ENCODE measurements at regions of chr11 and their contacts with region 1.

Region 1: GRCh38 chr11:66136752-66137123 is 66.7 kb downstream of the PACS1 start:
- DNase-seq: no peak
- CTCF ChIP-seq: no peak

Region 2: GRCh38 chr11:66045177-66045639 is 91.5 kb before region 1 on chr11:
- CTCF ChIA-PET with region 1: interaction called, 13 read pairs
- POLR2A ChIA-PET with region 1: no interaction called
- DNase-seq: peak; percentile 91
- CTCF ChIP-seq: peak; percentile 92

Region 3: GRCh38 chr11:66112601-66113098 is 24.1 kb before region 1 on chr11:
- CTCF ChIA-PET with region 1: interaction called, 64 read pairs
- POLR2A ChIA-PET with region 1: no interaction called
- DNase-seq: no peak
- CTCF ChIP-seq: no peak

Region 4: DNA sequence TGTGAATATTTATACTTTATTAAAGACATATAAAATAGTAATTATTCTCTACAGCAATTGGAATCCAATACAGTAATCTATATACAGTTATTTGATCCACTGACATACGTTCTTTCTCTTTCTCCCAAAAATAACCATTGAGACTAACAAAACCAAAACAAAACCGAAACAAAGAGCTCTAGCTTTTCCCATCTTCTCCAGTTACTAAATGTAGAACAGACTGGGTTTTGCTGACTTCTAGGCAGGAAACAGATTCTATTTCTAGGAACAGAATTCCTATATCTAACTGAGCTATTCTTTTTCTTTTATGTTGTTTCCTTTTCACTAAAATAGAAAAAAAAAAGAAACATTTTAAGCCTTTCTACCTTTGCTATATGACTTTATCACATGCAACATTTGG is 13.4 kb after region 1 on chr11:
- CTCF ChIA-PET with region 1: interaction called, 10 read pairs
- POLR2A ChIA-PET with region 1: no interaction called
- DNase-seq: no peak
- CTCF ChIP-seq: no peak

Region 5: GRCh38 chr11:66186470-66186869 is 49.7 kb after region 1 on chr11:
- CTCF ChIA-PET with region 1: no interaction called
- POLR2A ChIA-PET with region 1: no interaction called
- DNase-seq: no peak
- CTCF ChIP-seq: no peak

Region 6: GRCh38 chr11:66344550-66345315 is 208.0 kb after region 1 on chr11 and contains the start of gene BRMS1:
- CTCF ChIA-PET with region 1: no interaction called
- POLR2A ChIA-PET with region 1: no interaction called
- DNase-seq: peak; percentile 96
- CTCF ChIP-seq: no peak